ENCODE measurements at regions of chr7 and their contacts with region 1.

Region 1: GRCh38 chr7:140175221-140176121 is 1.3 kb downstream of the KDM7A start:
- DNase-seq: peak; percentile 97
- H3K4me3 Mint-ChIP-seq: peak overlapping the region; percentile 88
- H3K27ac Mint-ChIP-seq: peak overlapping the region; percentile 83
- H3K4me1 Mint-ChIP-seq: peaks cover 39% of the 10 kb centered on the region
- H3K27me3 Mint-ChIP-seq: peaks cover 4% of the 10 kb centered on the region

Region 2: DNA sequence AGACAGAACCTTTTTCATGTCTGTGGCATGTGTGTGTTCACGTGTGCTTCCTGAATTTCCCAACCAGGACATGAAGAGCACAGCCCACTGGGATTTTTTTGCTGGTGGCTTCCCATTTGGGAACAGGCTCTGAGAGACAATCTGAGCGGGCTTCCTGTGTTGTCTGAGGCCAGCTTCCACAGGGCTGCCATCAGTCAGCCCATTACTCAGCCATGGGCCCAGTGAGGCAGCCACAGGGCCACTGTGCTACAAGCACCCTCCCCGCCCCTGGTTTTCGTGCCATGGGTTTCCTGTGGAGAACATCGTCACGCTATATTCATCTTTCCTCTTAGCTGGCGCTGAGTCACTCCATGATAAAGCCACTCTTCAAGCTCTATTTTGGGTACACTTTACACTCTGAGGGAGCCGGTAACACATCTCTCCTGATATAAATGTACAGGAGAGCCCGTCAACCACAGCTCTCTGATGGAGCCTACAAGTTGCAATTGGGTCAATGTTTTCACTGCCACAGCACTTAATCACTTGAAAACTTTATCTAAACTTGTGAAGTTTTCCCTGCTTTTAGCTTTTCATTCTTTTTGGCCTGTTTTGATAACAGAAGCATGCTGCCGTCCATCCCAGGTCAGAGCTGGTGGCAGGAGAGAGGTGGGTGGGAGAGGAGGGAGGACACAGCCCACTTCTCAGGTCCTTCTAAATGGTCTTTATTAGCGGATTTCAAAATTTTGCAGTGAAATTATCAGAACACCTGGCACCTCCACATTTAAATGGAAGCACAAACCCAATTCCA is 494.6 kb before region 1 on chr7:
- intact Hi-C with region 1: loop called (anchors 5 kb)
- DNase-seq: peak; percentile 88
- H3K4me3 Mint-ChIP-seq: peak overlapping the region; percentile 67
- H3K27ac Mint-ChIP-seq: peak overlapping the region; percentile 91
- H3K4me1 Mint-ChIP-seq: peaks cover 48% of the 10 kb centered on the region
- H3K27me3 Mint-ChIP-seq: no peaks in the 10 kb centered on the region

Region 3: GRCh38 chr7:140196361-140197217 is 21.1 kb after region 1 on chr7:
- intact Hi-C with region 1: no loop called
- DNase-seq: no peak
- H3K4me3 Mint-ChIP-seq: no peak overlapping the region
- H3K27ac Mint-ChIP-seq: peak overlapping the region; percentile 61
- H3K4me1 Mint-ChIP-seq: peaks cover 16% of the 10 kb centered on the region
- H3K27me3 Mint-ChIP-seq: no peaks in the 10 kb centered on the region

Region 4: DNA sequence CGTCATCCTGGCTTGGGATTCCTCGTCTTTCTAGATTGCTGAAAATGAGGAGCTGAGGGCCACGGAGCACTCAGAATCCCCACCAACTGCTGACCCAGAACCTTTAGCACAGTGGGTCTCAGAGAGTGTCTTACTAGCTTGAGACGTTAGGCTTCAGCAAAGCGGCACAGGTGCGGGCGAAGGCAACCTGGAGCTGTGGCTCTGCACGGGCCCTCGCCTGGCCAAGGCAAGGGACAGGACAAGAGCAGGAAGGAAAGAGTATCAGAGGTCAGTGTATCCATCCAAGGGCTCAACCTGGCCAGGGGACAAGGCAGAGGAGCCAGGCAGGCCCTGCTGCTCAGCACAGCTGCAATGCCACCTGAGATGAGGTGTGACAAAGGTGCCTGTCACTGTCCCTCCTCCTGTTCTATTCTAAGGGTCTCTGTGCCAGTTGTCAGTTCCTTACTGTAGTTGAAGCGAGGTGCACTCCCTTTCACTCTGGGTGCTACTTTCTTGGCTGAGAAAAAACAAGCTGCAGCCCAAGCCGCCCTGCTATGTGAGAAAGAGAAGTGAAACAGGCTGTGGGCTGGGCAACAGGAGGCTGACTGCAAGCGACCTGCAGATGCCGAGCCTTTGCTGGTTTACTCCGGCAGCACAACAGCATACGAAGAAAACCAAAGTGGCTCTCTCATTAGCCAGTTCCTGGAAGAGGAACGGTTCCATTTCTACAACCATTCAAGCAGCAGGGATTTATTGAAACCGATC is 34.6 kb after region 1 on chr7:
- intact Hi-C with region 1: loop called (anchors 1 kb)
- DNase-seq: peak; percentile 90
- H3K4me3 Mint-ChIP-seq: peak overlapping the region; percentile 70
- H3K27ac Mint-ChIP-seq: peak overlapping the region; percentile 87
- H3K4me1 Mint-ChIP-seq: peaks cover 74% of the 10 kb centered on the region
- H3K27me3 Mint-ChIP-seq: peaks cover 3% of the 10 kb centered on the region

Region 5: GRCh38 chr7:140249036-140249806 is 73.8 kb after region 1 on chr7:
- intact Hi-C with region 1: loop called (anchors 1 kb)
- DNase-seq: no peak
- H3K4me3 Mint-ChIP-seq: no peak overlapping the region
- H3K27ac Mint-ChIP-seq: no peak overlapping the region
- H3K4me1 Mint-ChIP-seq: peaks cover 21% of the 10 kb centered on the region
- H3K27me3 Mint-ChIP-seq: no peaks in the 10 kb centered on the region

Region 6: DNA sequence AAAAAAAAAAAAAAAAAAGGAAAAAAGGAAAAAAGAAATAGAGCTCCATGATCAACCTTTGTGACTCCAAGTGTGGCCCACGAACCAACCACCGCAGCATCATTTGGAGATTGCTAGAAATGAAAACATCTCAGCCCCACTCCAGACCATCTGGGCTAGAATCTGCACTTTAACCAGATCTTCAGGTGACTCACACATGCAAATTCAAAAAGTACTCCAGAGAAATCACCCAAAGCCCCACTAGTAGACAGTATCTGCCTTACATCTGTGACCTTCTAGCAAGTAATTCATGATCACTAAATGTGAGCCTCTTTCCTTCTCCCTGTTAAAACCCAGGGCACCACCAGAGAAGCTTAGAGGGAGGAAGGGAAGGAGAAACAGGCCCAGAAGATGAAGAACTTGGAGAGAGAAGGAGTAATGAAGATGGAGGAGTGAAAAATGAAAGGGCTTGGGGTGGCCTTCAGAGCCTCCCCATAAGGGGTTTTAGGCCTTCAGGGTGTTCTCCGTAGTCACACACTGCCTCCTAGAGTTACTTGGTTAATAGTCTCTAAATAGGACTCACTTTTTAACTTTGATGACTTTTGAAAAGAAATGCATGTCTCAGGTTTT is 128.8 kb after region 1 on chr7:
- intact Hi-C with region 1: loop called (anchors 1 kb)
- DNase-seq: peak; percentile 83
- H3K4me3 Mint-ChIP-seq: no peak overlapping the region
- H3K27ac Mint-ChIP-seq: peak overlapping the region; percentile 89
- H3K4me1 Mint-ChIP-seq: peaks cover 10% of the 10 kb centered on the region
- H3K27me3 Mint-ChIP-seq: no peaks in the 10 kb centered on the region

Region 7: GRCh38 chr7:140397784-140398750 is 222.6 kb after region 1 on chr7 and contains the start of gene SLC37A3:
- intact Hi-C with region 1: loop called (anchors 1 kb)
- DNase-seq: peak; percentile 96
- H3K4me3 Mint-ChIP-seq: peak within 1 kb of the TSS; percentile 96
- H3K27ac Mint-ChIP-seq: peak within 1 kb of the TSS; percentile 92
- H3K4me1 Mint-ChIP-seq: peaks cover 30% of the 10 kb centered on the region
- H3K27me3 Mint-ChIP-seq: no peaks in the 10 kb centered on the region
- total RNA-seq, gene SLC37A3: 162 and 167 TPM in 2 replicates

Region 8: GRCh38 chr7:140479062-140479738 is 303.7 kb after region 1 on chr7 and contains the start of gene MKRN1:
- intact Hi-C with region 1: loop called (anchors 1 kb)
- DNase-seq: peak; percentile 98
- H3K4me3 Mint-ChIP-seq: peak within 1 kb of the TSS; percentile 99
- H3K27ac Mint-ChIP-seq: peak within 1 kb of the TSS; percentile 97
- H3K4me1 Mint-ChIP-seq: peaks cover 26% of the 10 kb centered on the region
- H3K27me3 Mint-ChIP-seq: peaks cover 13% of the 10 kb centered on the region
- total RNA-seq, gene MKRN1: 59.7 and 67.5 TPM in 2 replicates